GM12878 (cell line): ENCODE measurements at regions of chr9 and their contacts with region 1.

Region 1: GRCh38 chr9:124415102-124415851 is at the start of gene PSMB7:
- DNase-seq: peak; percentile 87
- ATAC-seq: peak; percentile 90
- H3K4me3 ChIP-seq: peak within 1 kb of the TSS; percentile 90
- H3K27ac ChIP-seq: peak within 1 kb of the TSS; percentile 54
- H3K4me1 ChIP-seq: peaks cover 9% of the 10 kb centered on the region
- H3K27me3 ChIP-seq: no peaks in the 10 kb centered on the region
- CTCF ChIP-seq: peak; percentile 86 to 93 (median 86)
- EP300 ChIP-seq: peak in 1 of 2 experiments; percentile 29; a peak in 1 of 4 replicates
- POLR2A ChIP-seq: peak; percentile 81
- RAD21 ChIP-seq: no peak
- polyA plus RNA-seq, gene PSMB7: 441 to 564 TPM

Region 2: GRCh38 chr9:124480621-124480981 is 65.3 kb after region 1 on chr9:
- CTCF ChIA-PET with region 1: no interaction called
- POLR2A ChIA-PET with region 1: no interaction called
- RAD21 ChIA-PET with region 1: no interaction called
- SMC1A ChIA-PET with region 1: no interaction called
- in situ Hi-C with region 1: no loop called
- intact Hi-C with region 1: loop called (anchors 5 kb)
- DNase-seq: no peak
- ATAC-seq: peak; percentile 93
- H3K4me3 ChIP-seq: no peak overlapping the region
- H3K27ac ChIP-seq: no peak overlapping the region
- H3K4me1 ChIP-seq: no peaks in the 10 kb centered on the region
- H3K27me3 ChIP-seq: peaks cover 2 to 5% of the 10 kb centered on the region in 2 experiments; a peak in 3 of 4 replicates
- CTCF ChIP-seq: peak; percentile 43 to 61 (median 61)
- EP300 ChIP-seq: no peak
- POLR2A ChIP-seq: no peak
- RAD21 ChIP-seq: peak; percentile 27; the same call in 1 of the 2 replicates